Psoas muscle (tissue), 8 donors: ENCODE measurements at regions of chr14 and their contacts with region 1.

Region 1: GRCh38 chr14:65373679-65374039 is 38.9 kb upstream of the FUT8 start:
- DNase-seq: peak in 1 of 2 donors; percentile 56
- ATAC-seq: peak; percentile 80 to 96 (median 90)
- H3K4me3 ChIP-seq: peak overlapping the region; percentile 42
- H3K27ac ChIP-seq: no peak overlapping the region
- H3K4me1 ChIP-seq: no peaks in the 10 kb centered on the region
- H3K27me3 ChIP-seq: peaks cover 0 to 1% (median 0%) of the 10 kb centered on the region in 3 donors
- CTCF ChIP-seq: peak; percentile 48

Region 2: DNA sequence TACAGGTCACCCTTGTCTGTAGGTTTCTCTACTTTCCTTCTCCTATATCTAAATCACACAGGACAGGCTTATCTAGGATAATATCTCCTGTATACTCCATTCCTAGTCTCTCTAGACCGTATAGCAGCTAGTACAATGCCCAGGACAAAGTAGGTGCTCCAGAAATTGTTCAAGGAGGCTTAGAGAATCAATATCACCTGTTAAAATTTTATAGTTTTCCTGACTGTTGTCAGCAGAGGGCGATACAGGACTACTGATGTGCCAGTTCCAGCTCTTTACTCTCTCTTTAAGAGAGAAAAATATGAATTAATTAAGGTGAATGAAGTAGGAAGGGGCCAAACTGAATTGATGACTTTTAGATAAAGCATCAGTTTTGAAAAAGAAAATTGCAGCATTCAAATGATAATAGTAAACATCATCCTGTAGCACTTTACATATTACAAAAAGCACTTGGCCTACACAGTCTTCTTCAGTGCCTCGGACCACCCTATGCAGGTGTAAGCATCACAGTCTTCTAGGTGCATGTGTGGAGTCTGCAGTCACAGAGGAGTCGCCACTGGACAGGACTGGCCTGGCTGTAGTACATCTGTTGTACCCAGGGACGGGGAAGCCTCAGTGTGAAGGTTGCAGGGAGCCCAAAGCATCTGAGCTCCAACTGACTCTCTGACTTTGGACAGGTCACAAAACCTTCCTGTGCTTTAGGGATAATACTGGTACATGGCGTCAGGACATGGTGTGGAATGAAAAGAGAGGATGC is 209.4 kb before region 1 on chr14:
- intact Hi-C with region 1: loop called (anchors 2 to 5 kb)
- DNase-seq: no peak
- ATAC-seq: peak in 3 of 4 donors; percentile 51 to 82 (median 67)
- H3K4me3 ChIP-seq: no peak overlapping the region
- H3K27ac ChIP-seq: no peak overlapping the region
- H3K4me1 ChIP-seq: no peaks in the 10 kb centered on the region
- H3K27me3 ChIP-seq: no peaks in the 10 kb centered on the region
- CTCF ChIP-seq: peak; percentile 73

Region 3: DNA sequence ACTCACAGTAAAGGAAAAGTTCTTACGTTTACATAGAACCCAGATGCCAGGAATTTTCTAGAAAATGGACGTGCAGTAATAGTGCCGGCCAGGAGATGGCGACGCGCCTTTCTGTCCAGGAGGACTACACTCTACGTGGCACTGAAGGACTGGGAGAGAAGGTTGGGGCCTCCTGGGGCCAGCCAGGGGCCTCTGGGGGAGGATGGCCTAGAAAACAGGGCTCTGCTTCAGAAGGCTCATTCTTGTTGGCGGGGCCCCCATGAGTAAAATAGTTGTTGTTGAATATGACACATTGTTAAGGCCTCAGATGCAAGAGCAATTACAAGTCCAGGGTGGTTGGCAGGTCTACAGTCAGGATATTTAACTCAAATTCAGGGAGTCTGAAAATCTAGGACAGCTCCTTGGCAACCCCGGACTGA is 151.2 kb before region 1 on chr14:
- intact Hi-C with region 1: loop called (anchors 5 kb)
- DNase-seq: peak; percentile 41 to 65
- ATAC-seq: peak in 3 of 4 donors; percentile 48 to 78 (median 74)
- H3K4me3 ChIP-seq: no peak overlapping the region
- H3K27ac ChIP-seq: no peak overlapping the region
- H3K4me1 ChIP-seq: no peaks in the 10 kb centered on the region
- H3K27me3 ChIP-seq: no peaks in the 10 kb centered on the region
- CTCF ChIP-seq: peak; percentile 57

Region 4: GRCh38 chr14:65332141-65332871 is 41.4 kb before region 1 on chr14:
- intact Hi-C with region 1: no loop called
- DNase-seq: no peak
- ATAC-seq: no peak
- H3K4me3 ChIP-seq: no peak overlapping the region
- H3K27ac ChIP-seq: no peak overlapping the region
- H3K4me1 ChIP-seq: no peaks in the 10 kb centered on the region
- H3K27me3 ChIP-seq: no peaks in the 10 kb centered on the region
- CTCF ChIP-seq: no peak

Region 5: GRCh38 chr14:65756880-65757279 is 383.2 kb after region 1 on chr14:
- intact Hi-C with region 1: no loop called
- DNase-seq: no peak
- ATAC-seq: no peak
- H3K4me3 ChIP-seq: no peak overlapping the region
- H3K27ac ChIP-seq: no peak overlapping the region
- H3K4me1 ChIP-seq: no peaks in the 10 kb centered on the region
- H3K27me3 ChIP-seq: no peaks in the 10 kb centered on the region
- CTCF ChIP-seq: no peak

Region 6: GRCh38 chr14:65949711-65950516 is 576.3 kb after region 1 on chr14:
- intact Hi-C with region 1: no loop called
- DNase-seq: peak; percentile 21 to 60
- ATAC-seq: peak; percentile 61 to 72 (median 62)
- H3K4me3 ChIP-seq: no peak overlapping the region
- H3K27ac ChIP-seq: no peak overlapping the region
- H3K4me1 ChIP-seq: no peaks in the 10 kb centered on the region
- H3K27me3 ChIP-seq: peaks cover 0 to 13% (median 3%) of the 10 kb centered on the region in 3 donors
- CTCF ChIP-seq: no peak